ENCODE measurements at regions of chr6 and their contacts with region 1.

Region 1: DNA sequence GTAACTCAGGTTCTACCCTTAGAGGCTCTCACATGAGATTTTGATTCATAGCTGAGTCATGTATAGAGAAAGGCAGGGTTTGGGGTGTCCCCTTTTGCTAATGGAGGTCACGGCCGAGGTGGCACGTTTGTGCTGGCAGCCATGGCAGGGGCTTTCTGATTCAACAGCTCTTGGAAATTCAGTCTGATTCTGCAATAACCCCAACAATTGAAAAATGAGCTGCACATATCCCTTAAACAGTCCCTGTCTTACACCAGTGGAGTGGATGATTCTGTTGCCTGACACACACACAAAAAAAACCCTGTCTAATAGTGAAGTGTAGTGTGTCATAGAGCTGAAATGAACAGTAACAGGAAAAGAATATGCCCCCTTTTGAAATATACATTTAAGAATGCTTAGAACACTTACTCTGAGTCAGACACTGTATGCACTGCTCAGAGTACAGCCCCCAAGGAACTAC is 40.4 kb upstream of the ARG1 start:
- DNase-seq: no peak
- ATAC-seq: no peak
- H3K4me3 ChIP-seq: no peak overlapping the region
- H3K27ac ChIP-seq: no peak overlapping the region
- H3K4me1 ChIP-seq: no peaks in the 10 kb centered on the region
- H3K27me3 ChIP-seq: peaks cover 0 to 6% (median 0%) of the 10 kb centered on the region in 7 donors
- CTCF ChIP-seq: no peak

Region 2: GRCh38 chr6:130885392-130886192 is 647.0 kb before region 1 on chr6:
- intact Hi-C with region 1: loop called (anchors 5 to 10 kb)
- DNase-seq: peak in 1 of 2 donors; percentile 83
- ATAC-seq: peak in 7 of 8 donors; percentile 81 to 92 (median 88)
- H3K4me3 ChIP-seq: no peak overlapping the region
- H3K27ac ChIP-seq: no peak overlapping the region
- H3K4me1 ChIP-seq: peaks cover 0 to 7% (median 0%) of the 10 kb centered on the region in 9 donors
- H3K27me3 ChIP-seq: no peaks in the 10 kb centered on the region
- CTCF ChIP-seq: peak; percentile 74 to 96 (median 89)

Region 3: DNA sequence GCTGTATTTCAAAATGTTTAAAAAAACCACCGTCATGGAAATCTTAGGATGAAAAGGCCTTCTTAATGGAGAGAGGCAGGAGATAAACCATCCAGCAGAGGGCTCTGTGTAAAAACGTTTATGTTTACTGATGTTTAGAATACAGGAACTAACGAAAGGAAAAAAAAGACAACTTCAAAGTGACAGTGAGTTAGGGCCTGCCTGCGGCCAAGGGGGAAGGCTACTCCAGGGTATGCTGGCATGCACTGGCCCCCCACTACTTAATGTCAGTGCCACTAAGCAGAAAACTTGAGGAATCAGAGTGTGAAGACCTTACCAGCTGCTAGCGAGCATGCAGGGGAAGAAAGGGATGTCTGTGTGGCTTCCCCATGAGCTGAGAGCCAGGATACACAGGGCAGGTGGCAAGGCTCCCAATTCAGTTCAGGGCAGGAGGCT is 349.6 kb before region 1 on chr6:
- intact Hi-C with region 1: loop called in 2 of 10 experiments (anchors 5 to 10 kb)
- DNase-seq: no peak
- ATAC-seq: peak in 1 of 8 donors; percentile 27
- H3K4me3 ChIP-seq: no peak overlapping the region
- H3K27ac ChIP-seq: no peak overlapping the region
- H3K4me1 ChIP-seq: no peaks in the 10 kb centered on the region
- H3K27me3 ChIP-seq: no peaks in the 10 kb centered on the region
- CTCF ChIP-seq: peak in 7 of 9 donors; percentile 9 to 53 (median 39)

Region 4: DNA sequence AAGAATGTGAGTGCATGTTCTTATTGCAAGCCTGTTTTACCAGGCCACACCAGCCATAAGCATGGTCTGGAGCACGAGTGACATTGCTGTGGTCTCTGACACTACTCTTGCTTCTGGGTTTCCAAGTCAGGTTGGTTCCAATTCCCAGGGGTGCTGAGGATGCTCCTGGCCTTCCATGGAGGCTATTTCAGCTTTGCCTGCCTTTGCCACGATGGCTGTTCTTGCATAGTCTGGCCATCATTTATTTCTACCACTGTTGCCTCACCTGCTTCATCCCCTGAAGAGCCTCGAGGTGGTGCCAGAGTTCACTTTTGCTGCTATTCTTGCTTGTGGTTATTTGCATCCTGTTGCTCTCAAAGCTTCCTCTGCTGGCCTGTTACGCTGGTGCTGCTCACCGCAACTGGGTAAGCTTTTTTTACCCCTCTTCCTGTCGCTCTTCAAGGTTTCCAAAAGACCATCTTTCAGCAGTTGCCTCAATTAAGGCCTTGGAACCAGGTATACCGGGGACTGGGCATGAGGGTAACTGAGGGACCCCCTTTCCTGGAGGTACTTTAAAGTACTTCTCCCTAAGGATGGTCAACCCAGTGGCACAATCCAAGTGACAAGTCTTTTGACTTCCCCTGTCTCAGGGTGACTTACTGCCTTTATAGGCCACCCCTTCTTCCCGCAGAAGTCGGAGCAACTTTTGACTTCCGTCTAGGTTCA is 332.9 kb before region 1 on chr6:
- intact Hi-C with region 1: loop called in 7 of 10 experiments (anchors 1 to 5 kb)
- DNase-seq: peak in 1 of 2 donors; percentile 13
- ATAC-seq: peak in 7 of 8 donors; percentile 61 to 84 (median 80)
- H3K4me3 ChIP-seq: peak overlapping the region in 1 of 10 donors; percentile 23
- H3K27ac ChIP-seq: peak overlapping the region in 1 of 10 donors; percentile 77
- H3K4me1 ChIP-seq: peaks cover 0 to 7% (median 0%) of the 10 kb centered on the region in 9 donors
- H3K27me3 ChIP-seq: no peaks in the 10 kb centered on the region
- CTCF ChIP-seq: peak in 8 of 9 donors; percentile 41 to 73 (median 65)